ENCODE measurements at regions of chr17 and their contacts with region 1.

Region 1: DNA sequence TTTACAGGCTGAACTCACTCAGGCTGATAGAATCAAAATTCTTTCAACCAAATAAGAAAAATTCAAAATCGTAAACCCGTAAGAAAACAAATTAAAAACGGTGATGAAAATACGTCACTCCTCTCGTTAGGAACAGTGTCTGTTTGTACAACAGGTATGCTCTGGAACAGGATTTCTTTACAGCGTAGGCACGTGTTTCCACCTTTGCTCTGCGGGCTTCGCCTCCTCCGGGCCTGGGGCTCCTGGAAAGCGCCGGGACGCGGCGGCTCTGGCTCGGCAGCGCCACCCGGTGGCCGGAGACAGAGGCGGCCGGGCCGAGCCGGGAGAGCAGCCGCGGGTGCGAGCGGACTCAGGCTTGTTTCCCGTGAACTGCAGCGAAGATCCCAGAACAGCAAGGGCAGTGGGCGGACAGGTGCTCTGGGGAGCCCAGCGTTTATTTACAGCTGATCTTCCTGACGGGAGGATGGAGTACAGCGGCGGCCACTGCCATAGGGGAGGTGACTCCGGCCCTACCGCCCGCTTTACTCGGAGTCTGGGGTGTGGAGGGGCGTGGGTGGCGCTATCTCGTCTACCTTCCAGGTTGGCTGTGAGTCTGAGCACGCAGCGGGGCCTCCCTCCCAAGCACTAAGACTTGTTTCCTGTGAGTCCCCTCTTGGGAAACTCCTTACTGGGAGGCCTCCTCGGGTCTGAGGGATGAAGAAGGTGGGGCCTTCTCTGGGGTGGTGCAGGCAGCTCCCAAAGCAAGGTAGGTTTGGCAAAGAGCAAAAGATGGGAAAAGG is 40.5 kb upstream of the ATP2A3 start:
- DNase-seq: peak; percentile 50 to 71
- ATAC-seq: peak; percentile 50 to 64 (median 56)
- H3K4me3 ChIP-seq: no peak overlapping the region
- H3K27ac ChIP-seq: no peak overlapping the region
- H3K4me1 ChIP-seq: peaks cover 5% of the 10 kb centered on the region
- H3K27me3 ChIP-seq: no peaks in the 10 kb centered on the region
- CTCF ChIP-seq: peak; percentile 92

Region 2: DNA sequence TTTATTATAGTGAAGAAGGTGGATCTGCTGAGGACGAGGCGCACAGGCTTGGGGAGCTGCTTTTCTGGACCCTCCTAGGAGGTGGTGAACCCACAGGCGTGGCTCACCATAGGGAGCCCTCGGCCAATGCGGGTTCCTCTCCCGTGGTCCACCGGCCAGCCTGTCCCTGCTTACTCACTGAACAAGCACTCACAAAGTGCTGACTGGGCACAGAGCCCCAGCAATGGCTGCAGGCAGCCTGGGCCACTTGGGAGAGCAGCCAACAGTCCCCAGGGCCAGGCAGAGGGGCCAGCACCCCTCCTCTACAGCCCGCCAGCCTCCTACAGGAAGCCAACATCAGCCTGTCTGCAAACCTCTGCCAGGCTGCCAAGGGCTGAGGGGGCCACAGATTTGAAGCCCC is 139.5 kb before region 1 on chr17:
- intact Hi-C with region 1: loop called in 1 of 2 experiments (anchors 1 kb)
- DNase-seq: peak in 1 of 2 donors; percentile 46
- ATAC-seq: peak in 2 of 4 donors; percentile 34
- H3K4me3 ChIP-seq: no peak overlapping the region
- H3K27ac ChIP-seq: no peak overlapping the region
- H3K4me1 ChIP-seq: no peaks in the 10 kb centered on the region
- H3K27me3 ChIP-seq: peaks cover 0 to 6% (median 0%) of the 10 kb centered on the region in 3 donors
- CTCF ChIP-seq: no peak

Region 3: DNA sequence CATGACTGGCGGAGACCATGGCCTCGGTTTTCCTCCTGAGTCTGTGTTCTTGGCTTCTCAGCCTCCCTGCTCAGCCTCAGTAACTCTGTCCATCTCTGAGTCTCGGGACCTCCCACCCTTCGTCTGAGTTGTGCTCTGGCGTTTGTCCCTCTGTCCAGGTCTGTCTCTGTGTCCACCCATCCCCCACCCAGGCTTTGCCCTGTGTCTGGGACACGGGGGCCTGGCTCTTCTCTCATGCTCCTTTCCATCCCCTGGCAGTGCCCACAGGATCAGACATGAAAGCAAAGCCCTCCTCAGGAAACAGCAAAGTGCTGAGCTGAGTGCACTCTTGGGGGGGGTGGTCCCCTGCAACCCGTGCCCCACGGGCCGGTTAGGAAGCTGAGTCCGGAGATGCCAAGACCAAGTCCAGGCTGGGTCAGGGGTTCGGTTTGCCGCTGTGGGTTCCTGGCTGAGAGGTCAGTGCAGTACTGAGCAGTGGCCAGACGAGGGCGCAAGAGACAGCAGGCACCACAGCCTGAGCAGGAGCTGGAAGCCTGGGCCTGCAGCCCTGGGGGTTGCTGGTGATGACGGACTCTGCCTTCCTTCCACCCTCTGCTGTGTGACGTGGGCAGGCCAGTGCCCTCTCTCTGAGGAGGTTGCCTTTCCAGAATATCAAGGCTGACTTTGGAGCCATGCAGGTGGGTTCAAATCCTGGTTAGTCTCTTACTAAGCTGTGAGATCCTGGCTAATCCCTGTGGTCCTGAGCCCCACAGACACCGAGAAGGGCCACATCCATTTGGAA is 91.0 kb before region 1 on chr17:
- intact Hi-C with region 1: loop called (anchors 1 to 5 kb)
- DNase-seq: peak; percentile 79 to 87
- ATAC-seq: peak; percentile 85 to 91 (median 89)
- H3K4me3 ChIP-seq: no peak overlapping the region
- H3K27ac ChIP-seq: no peak overlapping the region
- H3K4me1 ChIP-seq: peaks cover 4% of the 10 kb centered on the region
- H3K27me3 ChIP-seq: no peaks in the 10 kb centered on the region
- CTCF ChIP-seq: peak; percentile 95

Region 4: DNA sequence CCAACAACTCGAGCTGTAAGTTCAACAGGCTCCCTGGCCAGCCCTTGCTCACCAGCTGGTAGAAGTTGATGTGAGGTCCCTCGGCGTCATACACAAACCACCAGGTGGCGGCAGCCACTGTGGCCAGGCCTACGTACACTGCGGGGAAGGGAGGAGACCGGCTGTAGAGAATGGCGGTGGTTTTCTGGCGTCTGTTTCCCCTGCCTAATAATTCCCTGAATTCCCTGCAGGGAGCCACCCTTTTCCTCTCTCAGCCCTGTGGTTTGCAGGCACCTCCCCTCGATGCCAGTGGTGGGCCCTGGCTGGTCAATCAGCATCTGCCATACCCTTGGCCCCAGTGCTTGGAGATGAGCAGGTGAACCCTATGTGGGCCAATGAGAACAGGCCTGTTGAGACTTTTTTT is 69.6 kb before region 1 on chr17:
- intact Hi-C with region 1: loop called (anchors 2 to 5 kb)
- DNase-seq: peak; percentile 49 to 79
- ATAC-seq: peak; percentile 87 to 91 (median 90)
- H3K4me3 ChIP-seq: no peak overlapping the region
- H3K27ac ChIP-seq: no peak overlapping the region
- H3K4me1 ChIP-seq: no peaks in the 10 kb centered on the region
- H3K27me3 ChIP-seq: no peaks in the 10 kb centered on the region
- CTCF ChIP-seq: peak; percentile 55

Region 5: DNA sequence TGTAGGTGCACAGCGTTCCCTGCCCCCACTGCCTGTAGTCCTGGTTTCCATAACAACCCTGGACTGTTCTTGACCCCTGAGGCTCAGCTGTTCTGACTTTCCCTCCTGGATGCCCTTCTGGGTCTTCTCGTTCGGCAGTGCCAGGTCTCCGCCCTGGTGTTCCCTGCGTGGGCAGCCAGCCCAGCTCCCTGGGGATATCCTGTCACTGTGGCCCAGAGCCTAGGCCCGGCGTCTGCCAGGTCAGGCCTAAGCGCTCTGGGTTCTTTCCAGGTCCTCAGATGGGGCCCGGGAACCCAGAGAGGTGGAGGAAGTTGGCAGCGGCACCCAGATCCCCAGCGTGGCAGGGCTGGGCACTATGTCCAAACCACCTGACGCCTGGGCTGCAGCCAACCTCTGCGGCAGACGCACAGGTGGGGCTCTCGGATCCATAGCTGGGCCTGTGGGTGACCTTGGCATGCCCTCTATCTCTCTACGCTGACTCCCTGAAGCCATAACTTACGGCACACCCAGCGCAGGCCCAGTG is 28.0 kb before region 1 on chr17:
- intact Hi-C with region 1: no loop called
- DNase-seq: peak; percentile 77 to 91
- ATAC-seq: peak; percentile 91 to 95 (median 94)
- H3K4me3 ChIP-seq: no peak overlapping the region
- H3K27ac ChIP-seq: peak overlapping the region; percentile 67
- H3K4me1 ChIP-seq: peaks cover 12% of the 10 kb centered on the region
- H3K27me3 ChIP-seq: no peaks in the 10 kb centered on the region
- CTCF ChIP-seq: no peak

Measured in psoas muscle (tissue), 8 donors.